BJ (cell line): ENCODE measurements at regions of chr2 and their contacts with region 1.

Region 1: DNA sequence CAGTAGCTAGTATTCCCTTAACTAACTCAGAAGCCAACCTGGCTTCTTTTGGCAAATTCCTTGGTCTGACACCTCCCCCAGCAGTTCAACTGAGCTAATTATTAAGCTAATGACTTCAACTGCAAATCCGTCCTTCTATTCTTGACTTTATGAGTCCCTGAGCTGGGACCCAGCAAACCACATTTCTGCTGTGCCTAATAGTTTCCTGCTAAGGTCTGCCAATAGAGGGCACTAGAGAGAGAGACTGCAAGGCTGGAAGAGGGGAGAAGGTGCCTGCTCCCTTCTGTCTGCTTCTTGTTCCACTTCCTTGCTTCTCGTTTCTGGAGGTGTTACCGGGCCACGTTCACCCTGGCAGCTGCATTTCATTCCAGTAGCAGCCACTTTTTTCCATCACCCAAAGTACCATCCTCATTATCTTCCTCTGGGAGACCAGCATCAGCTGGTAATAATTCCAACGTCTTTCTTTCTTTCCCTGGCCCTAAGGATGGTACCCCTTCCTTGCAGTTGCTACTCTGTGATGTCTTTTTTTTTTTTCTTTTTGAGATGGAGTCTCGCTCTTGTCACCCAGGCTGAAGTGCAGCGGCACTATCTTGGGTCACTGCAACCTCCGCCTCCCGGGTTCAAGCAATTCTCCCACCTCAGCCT is 352.0 kb downstream of the TNS1 start:
- DNase-seq: no peak
- H3K4me3 ChIP-seq: no peak overlapping the region
- H3K27me3 ChIP-seq: no peaks in the 10 kb centered on the region
- CTCF ChIP-seq: peak; percentile 83

Region 2: GRCh38 chr2:217510771-217511291 is 140.0 kb before region 1 on chr2:
- CTCF ChIA-PET with region 1: interaction called, 13 read pairs
- POLR2A ChIA-PET with region 1: no interaction called
- DNase-seq: peak; percentile 38
- H3K4me3 ChIP-seq: no peak overlapping the region
- H3K27me3 ChIP-seq: no peaks in the 10 kb centered on the region
- CTCF ChIP-seq: peak; percentile 80

Region 3: DNA sequence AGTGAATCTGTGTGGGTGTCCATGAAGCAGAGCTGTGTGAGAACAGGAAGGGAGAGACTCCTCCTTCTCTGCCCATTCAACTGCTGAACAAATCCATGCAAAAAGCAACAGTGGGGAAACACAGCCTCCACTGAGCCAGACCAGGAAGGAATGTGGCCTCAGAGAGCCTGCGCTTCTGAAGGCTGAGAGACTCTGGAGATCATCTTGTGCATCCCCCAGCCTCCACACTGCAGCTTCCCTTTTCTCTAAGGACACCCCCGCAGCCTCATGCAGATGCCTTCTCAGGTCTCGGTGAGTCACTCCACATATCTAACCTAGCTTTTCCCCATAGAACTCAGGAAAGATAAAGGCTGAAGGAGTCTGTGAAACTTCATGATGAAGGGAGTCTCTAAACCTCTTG is 50.9 kb before region 1 on chr2:
- CTCF ChIA-PET with region 1: no interaction called
- POLR2A ChIA-PET with region 1: no interaction called
- DNase-seq: no peak
- H3K4me3 ChIP-seq: no peak overlapping the region
- H3K27me3 ChIP-seq: peaks cover 35% of the 10 kb centered on the region
- CTCF ChIP-seq: no peak

Region 4: DNA sequence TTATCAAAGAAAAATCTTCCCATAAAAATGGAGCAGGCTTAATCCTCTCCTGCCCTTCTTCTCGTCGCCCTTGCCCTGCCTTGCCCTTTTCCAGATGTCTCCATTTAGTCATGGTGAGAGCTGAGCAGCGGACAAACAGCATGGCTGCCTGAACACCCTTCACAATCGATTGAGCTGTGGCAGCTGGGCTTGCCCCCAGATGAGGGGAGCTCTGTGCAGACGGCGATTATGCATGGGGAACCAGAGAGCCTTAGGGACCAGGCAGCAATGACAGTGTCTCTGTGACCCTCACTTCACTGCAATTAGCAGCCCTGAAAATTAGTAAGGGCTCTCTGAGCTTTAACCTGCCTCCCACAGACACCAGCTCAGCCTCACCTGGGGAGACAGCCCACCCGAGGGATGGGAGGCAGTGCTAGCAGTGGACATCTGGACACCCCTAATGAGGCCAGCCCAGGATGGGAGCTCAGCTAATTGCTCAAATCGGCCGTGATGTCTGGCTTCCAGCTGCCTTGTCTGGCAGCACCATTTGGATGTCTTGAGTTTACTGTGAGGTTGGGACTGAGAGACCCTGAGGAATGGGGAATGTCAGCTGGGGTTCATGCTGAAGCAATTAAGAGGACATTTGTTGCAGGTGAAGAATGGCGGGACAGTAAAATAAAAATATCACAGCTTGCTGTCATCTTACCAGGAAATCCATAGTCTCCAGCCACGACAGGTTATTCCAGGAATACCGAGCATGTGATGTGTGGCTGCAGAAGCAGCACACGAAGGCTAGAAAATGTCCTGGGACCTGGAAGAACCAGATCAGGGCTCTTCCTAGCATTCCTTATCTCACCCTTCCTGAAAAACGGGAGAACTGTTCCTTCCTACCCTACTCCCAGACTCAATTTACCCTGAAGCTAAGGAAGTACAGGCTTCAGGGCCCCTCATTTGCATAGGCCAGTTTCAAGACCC is 13.6 kb before region 1 on chr2:
- CTCF ChIA-PET with region 1: interaction called, 25 read pairs
- POLR2A ChIA-PET with region 1: no interaction called
- DNase-seq: no peak
- H3K4me3 ChIP-seq: no peak overlapping the region
- H3K27me3 ChIP-seq: no peaks in the 10 kb centered on the region
- CTCF ChIP-seq: no peak

Region 5: DNA sequence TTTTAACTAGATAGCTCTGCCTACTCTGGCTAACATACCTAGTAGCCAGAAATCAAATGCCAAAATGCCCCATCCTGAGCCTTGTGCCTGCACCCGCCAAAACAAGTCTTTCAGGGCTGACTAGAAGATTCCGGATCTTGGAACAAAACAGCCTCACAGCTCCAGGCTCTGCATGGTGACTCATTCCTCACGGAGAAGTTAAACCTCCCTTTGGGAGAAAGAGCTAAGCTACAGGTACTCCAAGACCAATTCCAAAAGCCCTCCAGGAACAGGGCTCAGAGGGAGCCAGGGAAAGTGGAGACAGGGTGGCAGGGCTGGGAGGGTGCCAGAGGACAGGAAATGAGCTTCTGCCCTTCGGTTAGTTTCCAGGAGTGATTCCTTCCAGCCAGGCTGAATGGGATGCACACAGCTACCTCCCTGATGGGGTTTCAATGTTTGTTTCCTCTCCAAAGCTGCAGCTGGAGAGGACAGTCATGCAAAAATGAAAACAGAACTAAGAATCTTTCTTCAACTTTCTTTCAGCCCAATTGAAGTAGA is 56.4 kb after region 1 on chr2:
- CTCF ChIA-PET with region 1: interaction called, 123 read pairs
- POLR2A ChIA-PET with region 1: interaction called, 4 read pairs
- DNase-seq: peak; percentile 24
- H3K4me3 ChIP-seq: no peak overlapping the region
- H3K27me3 ChIP-seq: no peaks in the 10 kb centered on the region
- CTCF ChIP-seq: no peak

Region 6: GRCh38 chr2:217756375-217757107 is 105.7 kb after region 1 on chr2:
- CTCF ChIA-PET with region 1: interaction called, 11 read pairs
- POLR2A ChIA-PET with region 1: no interaction called
- DNase-seq: no peak
- H3K4me3 ChIP-seq: no peak overlapping the region
- H3K27me3 ChIP-seq: no peaks in the 10 kb centered on the region
- CTCF ChIP-seq: peak; percentile 97

Region 7: DNA sequence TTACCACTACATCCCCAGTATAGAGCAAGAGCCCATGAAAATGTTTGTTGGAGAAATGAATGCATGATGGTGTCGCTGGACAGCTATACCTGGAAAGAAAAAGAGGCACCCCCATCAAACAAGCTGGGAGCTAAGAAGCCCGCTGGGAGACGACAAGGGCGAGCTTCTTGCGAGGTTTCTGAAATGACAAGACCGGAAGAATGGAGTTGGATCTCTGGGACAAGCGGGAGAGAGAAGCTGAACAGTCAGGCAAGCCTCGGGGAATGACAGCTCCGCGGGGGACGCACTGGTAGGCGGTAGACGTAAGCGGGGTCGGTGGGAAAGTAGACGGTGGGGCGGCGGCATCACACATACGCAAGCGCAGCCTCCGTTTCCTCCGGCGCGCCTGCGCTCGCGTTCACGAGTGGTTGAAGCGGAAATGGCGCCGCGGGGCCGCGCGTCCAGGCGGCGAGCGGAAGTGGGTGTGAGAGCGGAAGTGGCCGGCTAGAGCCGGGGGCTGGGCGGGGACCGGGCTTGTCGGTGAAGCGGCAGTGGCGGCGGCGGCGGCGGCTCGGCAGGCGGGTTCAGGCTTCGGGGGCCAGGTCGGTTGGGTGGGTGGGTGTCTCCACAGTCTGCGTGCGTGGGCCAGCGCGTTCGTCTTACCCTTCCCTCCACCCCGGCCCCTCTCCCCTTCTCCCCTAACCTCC is 566.0 kb after region 1 on chr2 and contains the start of gene ARPC2:
- CTCF ChIA-PET with region 1: no interaction called
- POLR2A ChIA-PET with region 1: no interaction called
- DNase-seq: peak; percentile 66
- H3K4me3 ChIP-seq: peak within 1 kb of the TSS; percentile 98
- H3K27me3 ChIP-seq: no peaks in the 10 kb centered on the region; the same call in 1 of the 2 replicates
- CTCF ChIP-seq: no peak
- polyA plus RNA-seq, gene ARPC2: 699 and 831 TPM in 2 replicates